ENCODE measurements at regions of chr2 and their contacts with region 1.

Region 1: GRCh38 chr2:235005603-235006259 is 53.9 kb downstream of the SH3BP4 start:
- DNase-seq: peak; percentile 69 to 91
- ATAC-seq: peak; percentile 65 to 70
- H3K4me3 ChIP-seq: no peak overlapping the region
- H3K27ac ChIP-seq: peak overlapping the region; percentile 31 to 75 (median 58)
- H3K4me1 ChIP-seq: peaks cover 37 to 54% of the 10 kb centered on the region in 2 donors
- H3K27me3 ChIP-seq: no peaks in the 10 kb centered on the region
- CTCF ChIP-seq: peak; percentile 19 to 44 (median 31)
- POLR2A ChIP-seq: no peak

Region 2: GRCh38 chr2:234911271-234911670 is 94.5 kb before region 1 on chr2:
- in situ Hi-C with region 1: no loop called
- intact Hi-C with region 1: no loop called
- DNase-seq: no peak
- ATAC-seq: no peak
- H3K4me3 ChIP-seq: no peak overlapping the region
- H3K27ac ChIP-seq: no peak overlapping the region
- H3K4me1 ChIP-seq: no peaks in the 10 kb centered on the region
- H3K27me3 ChIP-seq: no peaks in the 10 kb centered on the region
- CTCF ChIP-seq: no peak
- POLR2A ChIP-seq: no peak

Region 3: GRCh38 chr2:234951664-234952269 is 54.0 kb before region 1 on chr2 and contains the start of gene SH3BP4:
- in situ Hi-C with region 1: no loop called
- intact Hi-C with region 1: loop called (anchors 5 kb)
- DNase-seq: peak; percentile 55 to 61
- ATAC-seq: peak; percentile 53 to 62
- H3K4me3 ChIP-seq: peak within 1 kb of the TSS; percentile 62 to 91 (median 76)
- H3K27ac ChIP-seq: peak within 1 kb of the TSS; percentile 69 to 81 (median 77)
- H3K4me1 ChIP-seq: peaks cover 5 to 15% of the 10 kb centered on the region in 2 donors
- H3K27me3 ChIP-seq: peaks cover 0 to 12% (median 0%) of the 10 kb centered on the region in 3 donors
- CTCF ChIP-seq: no peak
- POLR2A ChIP-seq: peak; percentile 42 to 51
- total RNA-seq, gene SH3BP4: 10.2 to 36.9 (median 15.9) TPM

Region 4: GRCh38 chr2:235045973-235046343 is 40.2 kb after region 1 on chr2:
- in situ Hi-C with region 1: no loop called
- intact Hi-C with region 1: no loop called
- DNase-seq: no peak
- ATAC-seq: no peak
- H3K4me3 ChIP-seq: no peak overlapping the region
- H3K27ac ChIP-seq: no peak overlapping the region
- H3K4me1 ChIP-seq: peaks cover 3 to 18% of the 10 kb centered on the region in 2 donors
- H3K27me3 ChIP-seq: no peaks in the 10 kb centered on the region
- CTCF ChIP-seq: no peak
- POLR2A ChIP-seq: no peak

Region 5: GRCh38 chr2:235055891-235056516 is 50.3 kb after region 1 on chr2:
- in situ Hi-C with region 1: no loop called
- intact Hi-C with region 1: loop called (anchors 1 kb)
- DNase-seq: peak in 1 of 2 donors; percentile 42
- ATAC-seq: peak; percentile 61 to 71
- H3K4me3 ChIP-seq: no peak overlapping the region
- H3K27ac ChIP-seq: peak overlapping the region in 3 of 4 donors; percentile 25 to 49 (median 40)
- H3K4me1 ChIP-seq: peaks cover 8 to 10% of the 10 kb centered on the region in 2 donors
- H3K27me3 ChIP-seq: no peaks in the 10 kb centered on the region
- CTCF ChIP-seq: peak; percentile 34 to 67 (median 61)
- POLR2A ChIP-seq: no peak

Region 6: DNA sequence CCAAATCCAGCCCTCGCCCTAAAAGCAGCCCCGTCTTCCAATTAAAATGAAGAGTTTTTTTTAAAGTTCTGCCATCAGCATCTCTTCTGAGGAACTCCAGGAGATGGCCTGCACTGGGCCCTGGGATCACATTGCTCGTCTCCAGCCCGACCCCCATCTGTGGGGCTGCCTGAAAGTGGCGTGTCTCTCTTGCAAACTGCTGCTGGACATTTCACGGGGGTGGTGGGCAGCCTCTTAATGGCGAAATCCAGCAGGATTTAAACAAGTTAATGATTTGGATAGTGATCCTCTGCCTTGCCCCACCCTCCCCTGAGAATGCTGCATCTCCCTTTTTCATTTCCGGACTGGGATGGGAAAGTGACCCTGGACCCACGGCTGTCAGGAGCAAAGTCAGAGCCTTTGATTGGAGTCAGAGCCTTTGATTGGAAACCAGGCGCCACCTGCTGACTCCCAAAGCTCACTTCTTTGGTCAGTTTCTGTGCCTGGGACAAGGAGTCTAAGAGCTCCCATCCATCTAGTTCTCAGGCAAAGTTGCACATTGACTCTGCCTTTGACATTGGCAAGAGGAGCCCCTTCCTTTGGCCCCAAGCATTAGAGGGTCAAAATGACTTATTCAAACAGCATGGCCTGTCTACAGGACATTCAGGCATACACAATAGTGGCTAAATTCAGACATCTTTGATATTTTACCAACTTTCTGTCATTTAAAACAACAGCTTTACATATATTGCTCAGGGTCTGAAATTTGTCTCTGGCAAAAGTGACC is 101.3 kb after region 1 on chr2:
- in situ Hi-C with region 1: no loop called
- intact Hi-C with region 1: loop called (anchors 1 kb)
- DNase-seq: peak in 1 of 2 donors; percentile 26
- ATAC-seq: peak in 1 of 2 donors; percentile 58
- H3K4me3 ChIP-seq: no peak overlapping the region
- H3K27ac ChIP-seq: no peak overlapping the region
- H3K4me1 ChIP-seq: no peaks in the 10 kb centered on the region
- H3K27me3 ChIP-seq: no peaks in the 10 kb centered on the region
- CTCF ChIP-seq: peak; percentile 37 to 58 (median 55)
- POLR2A ChIP-seq: no peak

Measured in gastrocnemius medialis (tissue), 4 donors.